A549 (cell line): ENCODE measurements at regions of chr20 and their contacts with region 1.

Region 1: DNA sequence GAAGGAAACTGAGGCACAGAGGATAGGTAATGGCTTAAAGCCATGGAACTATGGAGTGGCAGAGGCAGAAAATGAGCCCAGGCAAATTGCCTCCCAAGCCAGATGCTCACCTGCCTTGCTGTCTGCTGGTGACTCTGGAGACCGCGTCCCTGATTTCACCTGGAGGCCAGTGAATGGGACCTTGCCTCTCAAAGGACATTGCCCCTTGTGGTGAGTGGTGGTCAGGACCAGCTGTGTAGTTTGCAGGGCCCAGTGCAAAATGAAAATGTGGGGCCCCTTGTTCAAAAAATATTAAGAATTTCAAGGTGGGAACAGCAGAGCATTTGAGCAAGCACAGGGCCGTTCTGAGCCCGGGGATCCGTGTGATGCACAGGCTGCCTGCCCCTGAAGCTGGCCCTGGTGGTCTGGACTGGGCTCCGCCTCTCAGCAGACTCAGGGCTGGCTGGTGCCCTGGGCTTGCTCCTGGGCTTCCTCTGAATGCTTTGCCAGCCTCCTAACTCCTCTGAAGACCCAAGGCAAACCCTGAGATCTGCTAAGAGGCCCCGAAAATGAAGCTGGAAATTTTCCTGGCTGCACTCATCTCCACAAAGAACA is 19.8 kb upstream of the KCNG1 start:
- DNase-seq: no peak
- ATAC-seq: peak; percentile 62 to 82; a peak in 3 of 6 replicates
- H3K4me3 ChIP-seq: no peak overlapping the region
- H3K27ac ChIP-seq: no peak overlapping the region; a peak in 1 of 6 replicates
- H3K4me1 ChIP-seq: no peaks in the 10 kb centered on the region
- CTCF ChIP-seq: no peak
- EP300 ChIP-seq: no peak
- POLR2A ChIP-seq: no peak
- RAD21 ChIP-seq: no peak

Region 2: DNA sequence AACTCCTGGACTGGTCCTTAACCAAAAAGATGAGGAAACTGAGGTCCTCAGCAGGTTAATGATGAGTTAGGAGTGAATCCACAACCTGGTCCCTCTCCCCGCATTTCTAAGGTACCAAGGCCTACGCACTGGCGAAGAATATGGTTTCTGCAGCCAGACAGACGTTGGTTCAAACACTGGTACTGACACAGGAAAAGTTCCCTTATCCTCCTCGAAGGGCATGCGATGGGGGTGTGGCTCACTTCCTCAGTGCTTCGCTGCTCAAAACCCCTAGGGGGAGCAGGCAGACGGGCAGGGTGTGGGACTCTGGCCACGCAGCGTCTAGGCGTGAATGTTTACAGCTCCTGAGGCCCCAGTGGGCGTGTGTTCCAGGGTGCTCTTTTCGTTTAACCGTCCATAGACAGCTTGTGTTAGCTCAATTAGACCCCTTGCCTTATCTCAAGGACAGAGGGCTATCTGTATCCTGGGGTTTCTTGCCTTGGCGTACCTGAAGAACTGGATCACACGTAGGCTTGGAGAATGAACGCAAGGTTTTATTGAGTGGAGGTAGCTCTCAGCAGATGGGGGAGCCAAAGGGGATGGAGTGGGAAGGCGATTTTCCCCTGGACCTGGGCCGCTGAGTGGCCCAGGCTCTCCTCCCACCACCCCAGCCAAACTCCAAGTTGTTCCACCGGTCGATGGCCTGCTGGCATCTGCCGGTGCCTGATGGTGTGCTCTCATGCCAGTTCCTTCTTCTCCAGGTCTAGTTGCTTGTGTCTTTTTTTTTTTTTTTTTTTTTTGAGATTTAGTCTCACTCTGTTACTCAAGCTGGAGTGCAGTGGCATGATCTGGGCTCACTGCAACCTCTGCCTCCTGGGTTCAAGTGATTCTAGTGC is 564.4 kb before region 1 on chr20:
- CTCF ChIA-PET with region 1: no interaction called
- POLR2A ChIA-PET with region 1: no interaction called
- DNase-seq: peak; percentile 64 to 73
- ATAC-seq: peak; percentile 94 to 99
- H3K4me3 ChIP-seq: no peak overlapping the region
- H3K27ac ChIP-seq: 0 out of 6 replicates have a peak overlapping the region, but pooled peaks of 1 of the 2 experiments have one; percentile 11
- H3K4me1 ChIP-seq: peaks cover 21% of the 10 kb centered on the region
- CTCF ChIP-seq: peak; percentile 45
- EP300 ChIP-seq: no peak
- POLR2A ChIP-seq: no peak
- RAD21 ChIP-seq: peak; percentile 41 to 63; a peak in 3 of 5 replicates

Region 3: GRCh38 chr20:51029963-51030920 is 12.5 kb before region 1 on chr20:
- CTCF ChIA-PET with region 1: interaction called, 11 read pairs
- POLR2A ChIA-PET with region 1: no interaction called
- DNase-seq: no peak
- ATAC-seq: no peak
- H3K4me3 ChIP-seq: no peak overlapping the region
- H3K27ac ChIP-seq: peak overlapping the region in 1 of 2 experiments; percentile 26; a peak in 1 of 6 replicates
- H3K4me1 ChIP-seq: peaks cover 17% of the 10 kb centered on the region
- CTCF ChIP-seq: no peak
- EP300 ChIP-seq: no peak
- POLR2A ChIP-seq: no peak
- RAD21 ChIP-seq: no peak

Region 4: DNA sequence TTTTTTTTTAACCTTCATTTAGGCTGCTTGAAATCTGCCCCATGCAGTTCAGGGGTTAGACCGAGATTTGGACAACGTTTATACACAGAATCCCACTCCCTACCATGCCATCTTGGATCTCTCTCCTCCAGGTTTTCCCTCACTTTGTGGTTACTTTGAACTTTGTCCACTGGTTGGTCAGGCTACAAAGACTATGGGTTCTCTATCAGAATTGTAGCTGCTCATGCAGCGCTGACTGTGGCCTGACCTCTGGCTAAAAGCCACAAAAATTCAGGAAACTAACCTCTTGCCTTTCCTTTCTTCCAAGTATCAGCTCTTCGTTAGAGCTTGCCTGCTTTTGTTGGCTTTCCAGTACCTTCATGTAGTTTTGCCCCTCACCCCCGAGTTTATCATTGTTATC is 25.0 kb after region 1 on chr20:
- CTCF ChIA-PET with region 1: no interaction called
- POLR2A ChIA-PET with region 1: no interaction called
- DNase-seq: no peak
- ATAC-seq: no peak
- H3K4me3 ChIP-seq: no peak overlapping the region
- H3K27ac ChIP-seq: no peak overlapping the region
- H3K4me1 ChIP-seq: no peaks in the 10 kb centered on the region
- CTCF ChIP-seq: no peak
- EP300 ChIP-seq: no peak
- POLR2A ChIP-seq: no peak
- RAD21 ChIP-seq: no peak

Region 5: DNA sequence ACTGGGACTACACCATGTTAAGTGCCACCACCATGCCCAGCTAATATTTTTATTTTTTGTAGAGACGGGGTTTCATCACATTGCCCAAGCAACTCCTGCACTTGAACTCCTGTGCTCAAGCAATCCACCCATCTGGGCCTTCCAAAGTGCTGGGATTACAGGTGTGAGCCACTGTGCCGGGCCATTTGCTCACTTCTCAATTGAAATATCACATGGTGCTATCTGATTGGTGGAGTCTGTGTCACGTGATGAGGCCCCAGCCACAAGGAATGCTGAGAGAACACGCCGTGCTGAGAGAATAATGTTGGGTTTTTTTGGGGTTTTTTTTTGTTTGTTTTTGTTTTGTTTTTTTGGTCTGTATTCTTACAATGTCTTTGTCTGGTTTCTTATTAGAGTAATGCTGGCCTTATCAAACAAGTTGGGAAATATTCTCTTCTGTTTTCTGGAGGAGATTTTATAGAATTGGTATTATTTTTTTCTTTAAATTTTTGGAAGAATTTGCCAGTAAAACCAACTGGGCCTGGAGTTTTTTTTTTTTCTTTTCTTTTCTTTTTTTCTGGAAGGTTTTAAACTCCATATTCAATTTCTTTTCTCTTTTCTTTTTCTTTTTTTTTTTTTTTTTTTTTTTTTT is 163.4 kb after region 1 on chr20:
- CTCF ChIA-PET with region 1: no interaction called
- POLR2A ChIA-PET with region 1: no interaction called
- DNase-seq: no peak
- ATAC-seq: no peak
- H3K4me3 ChIP-seq: no peak overlapping the region
- H3K27ac ChIP-seq: no peak overlapping the region
- H3K4me1 ChIP-seq: no peaks in the 10 kb centered on the region
- CTCF ChIP-seq: no peak
- EP300 ChIP-seq: no peak
- POLR2A ChIP-seq: no peak
- RAD21 ChIP-seq: no peak

Region 6: DNA sequence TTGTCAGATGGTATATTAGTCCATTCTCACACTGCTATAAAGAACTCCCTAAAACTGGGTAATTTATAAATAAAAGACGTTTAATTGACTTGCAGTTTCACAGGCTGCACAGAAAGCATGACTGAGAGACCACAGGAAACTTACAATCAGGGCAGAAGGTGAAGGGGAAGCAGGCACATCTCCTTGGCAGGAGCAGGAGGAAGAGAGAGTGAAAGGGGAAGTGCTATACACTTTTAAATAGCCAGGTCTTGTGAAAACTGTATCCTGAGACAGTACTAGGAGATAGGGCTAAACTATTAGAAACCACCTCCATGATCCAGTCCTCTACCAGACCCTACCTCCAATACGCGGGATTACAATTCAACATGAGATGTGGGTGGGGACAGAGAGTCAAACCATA is 174.1 kb after region 1 on chr20:
- CTCF ChIA-PET with region 1: no interaction called
- POLR2A ChIA-PET with region 1: no interaction called
- DNase-seq: no peak
- ATAC-seq: no peak
- H3K4me3 ChIP-seq: no peak overlapping the region
- H3K27ac ChIP-seq: no peak overlapping the region
- H3K4me1 ChIP-seq: peaks cover 3% of the 10 kb centered on the region; the same call in 1 of the 3 replicates
- CTCF ChIP-seq: no peak
- EP300 ChIP-seq: no peak
- POLR2A ChIP-seq: no peak
- RAD21 ChIP-seq: no peak